ENCODE measurements at regions of chr22 and their contacts with region 1.

Region 1: GRCh38 chr22:27561286-27561904 is 240.2 kb downstream of the MN1 start:
- DNase-seq: no peak
- H3K4me3 ChIP-seq: no peak overlapping the region
- H3K27ac ChIP-seq: no peak overlapping the region
- H3K4me1 ChIP-seq: no peaks in the 10 kb centered on the region
- H3K27me3 ChIP-seq: no peaks in the 10 kb centered on the region
- CTCF ChIP-seq: no peak
- POLR2A ChIP-seq: no peak

Region 2: GRCh38 chr22:27614006-27614649 is 52.7 kb after region 1 on chr22:
- intact Hi-C with region 1: loop called (anchors 5 kb)
- DNase-seq: no peak
- H3K4me3 ChIP-seq: peak overlapping the region; percentile 15 to 52
- H3K27ac ChIP-seq: no peak overlapping the region
- H3K4me1 ChIP-seq: peaks cover 10% of the 10 kb centered on the region
- H3K27me3 ChIP-seq: no peaks in the 10 kb centered on the region
- CTCF ChIP-seq: no peak
- POLR2A ChIP-seq: no peak